ENCODE measurements at regions of chr17 and their contacts with region 1.

Region 1: DNA sequence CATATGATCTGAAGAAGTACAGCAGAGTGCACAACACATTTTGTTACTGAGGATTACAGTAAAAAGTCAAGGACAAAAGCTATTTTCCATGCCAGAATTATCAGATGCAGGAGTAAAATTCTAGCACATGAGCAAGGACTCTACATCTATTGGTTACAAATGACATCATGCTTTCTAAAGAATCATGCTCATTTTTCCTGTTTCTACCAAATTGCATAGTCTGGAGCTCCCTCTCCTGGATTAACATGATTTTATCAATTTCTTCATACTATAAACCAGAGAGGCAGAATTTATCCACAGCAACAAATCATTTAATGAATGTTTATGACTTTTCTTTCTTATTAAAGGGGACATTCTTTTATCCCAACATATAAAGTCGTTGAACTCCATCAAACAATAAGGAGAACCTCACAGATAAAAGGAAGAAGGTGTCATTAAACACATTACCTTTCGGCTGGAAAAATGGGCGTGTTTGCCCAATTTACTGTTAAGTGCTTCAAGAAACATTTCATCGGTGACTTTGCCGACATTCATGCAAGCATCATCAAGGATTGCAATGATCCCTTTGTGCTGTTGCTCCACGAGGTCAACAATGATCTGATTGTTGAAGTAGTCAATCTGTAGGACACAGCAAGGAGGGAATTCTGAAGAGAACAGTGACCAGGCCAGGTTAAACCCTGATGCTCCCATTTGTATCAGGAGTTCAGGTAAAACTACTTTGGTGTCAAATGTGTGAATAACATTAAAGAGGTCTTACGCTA is 121.7 kb downstream of the MYO1D start:
- DNase-seq: peak; percentile 62
- ATAC-seq: peak; percentile 41
- H3K4me3 ChIP-seq: no peak overlapping the region
- H3K4me3 Mint-ChIP-seq: no peak overlapping the region
- H3K27ac ChIP-seq: no peak overlapping the region
- H3K27ac Mint-ChIP-seq: no peak overlapping the region
- H3K4me1 ChIP-seq: no peaks in the 10 kb centered on the region
- H3K4me1 Mint-ChIP-seq: no peaks in the 10 kb centered on the region
- H3K27me3 ChIP-seq: no peaks in the 10 kb centered on the region
- H3K27me3 Mint-ChIP-seq: no peaks in the 10 kb centered on the region
- CTCF ChIP-seq: peak; percentile 64

Region 2: DNA sequence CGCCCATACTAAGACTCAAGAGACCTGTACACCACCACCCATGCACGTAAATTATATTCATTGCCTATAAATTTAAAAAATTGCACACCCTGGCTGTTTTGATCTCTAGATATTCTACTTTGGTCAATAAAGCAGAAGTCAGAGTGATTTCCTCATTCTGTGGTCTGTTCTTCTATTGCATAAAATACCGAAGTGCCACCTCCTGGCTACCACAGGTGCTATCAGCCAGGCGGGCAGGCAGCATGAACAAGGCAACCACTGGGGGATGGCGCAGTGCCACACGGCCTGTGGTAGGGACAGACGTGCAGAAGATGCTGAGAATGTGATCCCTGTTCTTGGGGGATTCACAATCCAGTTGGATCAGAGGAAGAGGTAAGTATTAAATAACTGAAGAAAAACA is 146.1 kb before region 1 on chr17:
- CTCF ChIA-PET with region 1: no interaction called
- POLR2A ChIA-PET with region 1: no interaction called
- intact Hi-C with region 1: loop called (anchors 1 kb)
- DNase-seq: peak; percentile 85
- ATAC-seq: peak; percentile 100
- H3K4me3 ChIP-seq: no peak overlapping the region
- H3K4me3 Mint-ChIP-seq: no peak overlapping the region
- H3K27ac ChIP-seq: no peak overlapping the region
- H3K27ac Mint-ChIP-seq: no peak overlapping the region
- H3K4me1 ChIP-seq: peaks cover 6 to 8% of the 10 kb centered on the region in 2 donors
- H3K4me1 Mint-ChIP-seq: peaks cover 9% of the 10 kb centered on the region
- H3K27me3 ChIP-seq: no peaks in the 10 kb centered on the region
- H3K27me3 Mint-ChIP-seq: no peaks in the 10 kb centered on the region
- CTCF ChIP-seq: peak; percentile 82

Region 3: DNA sequence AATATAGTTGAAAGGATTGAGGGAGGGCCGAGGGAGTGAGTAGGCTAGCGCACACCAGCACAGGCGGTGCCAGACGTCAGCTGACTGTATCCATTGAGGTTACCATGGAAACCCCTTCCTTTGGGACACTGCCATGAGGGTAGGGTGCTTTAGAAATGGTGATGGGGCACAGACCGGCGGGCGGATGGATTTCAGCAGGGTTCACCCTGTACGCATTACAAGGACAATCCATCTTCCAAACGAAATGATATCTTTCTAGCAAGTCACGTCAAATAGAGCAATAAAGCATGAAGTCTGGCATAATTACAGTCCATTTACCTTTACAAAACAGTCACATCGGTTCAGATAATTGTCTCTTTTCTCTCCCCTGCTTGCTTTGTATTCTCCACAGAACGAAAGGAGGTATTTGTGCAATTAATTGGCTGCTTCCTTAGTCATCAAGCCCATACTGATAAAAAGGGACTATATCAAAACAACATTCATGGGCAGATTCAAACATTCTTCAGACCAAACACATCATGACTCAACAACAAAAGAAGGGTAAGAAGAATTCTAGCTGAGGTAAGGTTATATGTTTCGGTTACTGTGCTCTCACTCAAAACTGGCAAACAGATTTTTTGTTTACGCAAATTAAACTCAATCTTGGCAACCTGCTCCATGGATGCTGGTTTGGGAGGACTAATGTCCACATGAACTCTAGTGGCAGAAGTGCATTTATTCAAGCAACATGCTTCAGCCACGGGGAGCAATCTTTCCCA is 127.8 kb before region 1 on chr17:
- CTCF ChIA-PET with region 1: no interaction called
- POLR2A ChIA-PET with region 1: no interaction called
- intact Hi-C with region 1: no loop called
- DNase-seq: no peak
- ATAC-seq: no peak
- H3K4me3 ChIP-seq: no peak overlapping the region
- H3K4me3 Mint-ChIP-seq: no peak overlapping the region
- H3K27ac ChIP-seq: no peak overlapping the region
- H3K27ac Mint-ChIP-seq: no peak overlapping the region
- H3K4me1 ChIP-seq: no peaks in the 10 kb centered on the region
- H3K4me1 Mint-ChIP-seq: no peaks in the 10 kb centered on the region
- H3K27me3 ChIP-seq: no peaks in the 10 kb centered on the region
- H3K27me3 Mint-ChIP-seq: no peaks in the 10 kb centered on the region
- CTCF ChIP-seq: no peak

Region 4: GRCh38 chr17:32659419-32659842 is 95.8 kb before region 1 on chr17:
- CTCF ChIA-PET with region 1: interaction called, 9 read pairs
- POLR2A ChIA-PET with region 1: no interaction called
- intact Hi-C with region 1: loop called (anchors 1 kb)
- DNase-seq: peak; percentile 65
- ATAC-seq: peak; percentile 71
- H3K4me3 ChIP-seq: no peak overlapping the region
- H3K4me3 Mint-ChIP-seq: no peak overlapping the region
- H3K27ac ChIP-seq: no peak overlapping the region
- H3K27ac Mint-ChIP-seq: no peak overlapping the region
- H3K4me1 ChIP-seq: no peaks in the 10 kb centered on the region
- H3K4me1 Mint-ChIP-seq: no peaks in the 10 kb centered on the region
- H3K27me3 ChIP-seq: no peaks in the 10 kb centered on the region
- H3K27me3 Mint-ChIP-seq: no peaks in the 10 kb centered on the region
- CTCF ChIP-seq: peak; percentile 98

Region 5: DNA sequence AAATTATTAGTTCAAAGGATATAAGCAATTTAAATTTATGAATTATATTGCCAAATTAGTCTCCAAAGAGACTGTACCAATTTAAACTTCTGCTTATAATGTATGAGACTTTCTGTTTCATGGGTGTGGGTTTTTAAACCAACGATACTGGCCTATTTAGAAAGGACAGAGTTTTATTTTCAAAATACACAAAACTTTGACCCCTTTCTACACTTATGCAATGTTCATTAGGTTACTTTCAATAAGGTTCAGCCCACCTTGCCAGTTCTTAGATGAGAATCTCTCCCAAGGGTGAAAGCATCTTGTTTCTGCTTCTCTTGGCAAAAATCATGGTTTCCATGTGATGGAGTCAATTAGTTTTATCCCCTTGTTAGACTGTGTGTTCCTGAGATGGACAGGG is 37.0 kb after region 1 on chr17:
- CTCF ChIA-PET with region 1: no interaction called
- POLR2A ChIA-PET with region 1: no interaction called
- intact Hi-C with region 1: no loop called
- DNase-seq: no peak
- ATAC-seq: no peak
- H3K4me3 ChIP-seq: no peak overlapping the region
- H3K4me3 Mint-ChIP-seq: no peak overlapping the region
- H3K27ac ChIP-seq: no peak overlapping the region
- H3K27ac Mint-ChIP-seq: no peak overlapping the region
- H3K4me1 ChIP-seq: no peaks in the 10 kb centered on the region
- H3K4me1 Mint-ChIP-seq: no peaks in the 10 kb centered on the region
- H3K27me3 ChIP-seq: no peaks in the 10 kb centered on the region
- H3K27me3 Mint-ChIP-seq: no peaks in the 10 kb centered on the region
- CTCF ChIP-seq: no peak

Region 6: DNA sequence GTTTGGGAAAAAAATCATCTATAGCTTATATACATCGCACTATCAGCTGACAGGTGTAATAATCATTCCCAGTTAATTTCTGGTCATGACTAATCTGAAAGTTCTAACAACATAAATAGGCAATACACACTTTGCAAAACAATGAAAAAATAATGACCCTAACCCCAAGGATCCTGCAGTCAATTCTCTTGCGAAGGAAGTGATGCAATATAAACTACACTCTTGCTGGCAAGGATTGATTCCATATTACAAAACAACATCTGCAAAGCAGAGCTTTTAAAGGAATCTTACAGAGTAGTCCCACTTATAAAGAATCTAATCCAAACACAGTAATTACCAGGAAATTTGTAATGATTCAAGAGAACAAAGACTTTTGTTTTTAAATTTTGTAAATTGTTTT is 48.3 kb after region 1 on chr17:
- CTCF ChIA-PET with region 1: no interaction called
- POLR2A ChIA-PET with region 1: no interaction called
- intact Hi-C with region 1: no loop called
- DNase-seq: no peak
- ATAC-seq: no peak
- H3K4me3 ChIP-seq: no peak overlapping the region
- H3K4me3 Mint-ChIP-seq: no peak overlapping the region
- H3K27ac ChIP-seq: no peak overlapping the region
- H3K27ac Mint-ChIP-seq: no peak overlapping the region
- H3K4me1 ChIP-seq: no peaks in the 10 kb centered on the region
- H3K4me1 Mint-ChIP-seq: no peaks in the 10 kb centered on the region
- H3K27me3 ChIP-seq: peaks cover 0 to 2% (median 0%) of the 10 kb centered on the region in 4 experiments
- H3K27me3 Mint-ChIP-seq: no peaks in the 10 kb centered on the region
- CTCF ChIP-seq: no peak

Region 7: DNA sequence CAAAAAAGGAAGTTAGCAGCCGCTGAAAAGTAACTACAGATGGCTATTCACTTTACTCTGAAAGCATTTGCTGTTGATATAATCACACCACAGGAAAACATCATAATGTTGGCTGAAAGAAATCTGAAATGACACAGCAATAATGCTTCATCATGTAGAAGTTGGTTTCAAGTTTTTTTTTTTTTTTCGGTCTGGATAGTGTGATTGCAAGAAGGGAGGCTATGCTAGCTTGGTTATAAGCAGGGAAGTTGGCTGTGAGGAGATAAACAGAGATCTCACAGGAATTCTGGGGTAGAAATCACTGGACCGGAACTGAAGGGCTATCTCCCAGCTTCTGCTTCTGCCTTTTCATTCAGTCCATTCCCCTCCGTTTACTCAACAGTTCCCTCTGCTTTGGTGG is 63.8 kb after region 1 on chr17:
- CTCF ChIA-PET with region 1: no interaction called
- POLR2A ChIA-PET with region 1: no interaction called
- intact Hi-C with region 1: no loop called
- DNase-seq: no peak
- ATAC-seq: no peak
- H3K4me3 ChIP-seq: no peak overlapping the region
- H3K4me3 Mint-ChIP-seq: no peak overlapping the region
- H3K27ac ChIP-seq: no peak overlapping the region
- H3K27ac Mint-ChIP-seq: no peak overlapping the region
- H3K4me1 ChIP-seq: peaks cover 2 to 4% of the 10 kb centered on the region in 2 donors
- H3K4me1 Mint-ChIP-seq: peaks cover 12% of the 10 kb centered on the region
- H3K27me3 ChIP-seq: peaks cover 0 to 4% (median 0%) of the 10 kb centered on the region in 4 experiments
- H3K27me3 Mint-ChIP-seq: no peaks in the 10 kb centered on the region
- CTCF ChIP-seq: no peak